GM18951 (cell line): ENCODE measurements at regions of chr3 and their contacts with region 1.

Region 1: GRCh38 chr3:45938864-45939263 is 4.4 kb upstream of the CXCR6 start:
- POLR2A ChIP-seq: no peak

Region 2: GRCh38 chr3:45507820-45508317 is 431.0 kb before region 1 on chr3:
- in situ Hi-C with region 1: loop called (anchors 25 kb)
- POLR2A ChIP-seq: no peak

Region 3: DNA sequence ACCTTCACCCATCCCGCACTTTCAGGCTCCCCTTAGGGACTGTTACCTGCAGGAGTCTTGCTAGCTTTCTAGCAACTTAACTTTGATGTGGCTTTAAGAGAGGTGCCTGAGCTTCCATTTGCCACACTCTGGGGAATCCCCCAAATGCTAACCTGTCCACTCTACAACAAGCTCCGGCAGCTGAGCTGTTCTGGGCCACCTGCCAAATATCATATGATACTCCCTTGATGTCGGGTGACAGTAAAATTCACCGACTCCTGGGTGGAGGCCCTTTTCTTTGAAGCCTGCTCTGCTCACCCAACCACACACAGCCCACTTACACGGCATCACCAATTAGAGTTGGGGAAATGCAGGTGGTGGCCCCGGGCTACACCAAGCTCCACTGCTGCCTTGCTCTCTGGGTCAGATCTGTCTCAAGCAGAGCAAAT is 126.4 kb after region 1 on chr3:
- in situ Hi-C with region 1: loop called (anchors 5 kb)
- POLR2A ChIP-seq: no peak

Region 4: DNA sequence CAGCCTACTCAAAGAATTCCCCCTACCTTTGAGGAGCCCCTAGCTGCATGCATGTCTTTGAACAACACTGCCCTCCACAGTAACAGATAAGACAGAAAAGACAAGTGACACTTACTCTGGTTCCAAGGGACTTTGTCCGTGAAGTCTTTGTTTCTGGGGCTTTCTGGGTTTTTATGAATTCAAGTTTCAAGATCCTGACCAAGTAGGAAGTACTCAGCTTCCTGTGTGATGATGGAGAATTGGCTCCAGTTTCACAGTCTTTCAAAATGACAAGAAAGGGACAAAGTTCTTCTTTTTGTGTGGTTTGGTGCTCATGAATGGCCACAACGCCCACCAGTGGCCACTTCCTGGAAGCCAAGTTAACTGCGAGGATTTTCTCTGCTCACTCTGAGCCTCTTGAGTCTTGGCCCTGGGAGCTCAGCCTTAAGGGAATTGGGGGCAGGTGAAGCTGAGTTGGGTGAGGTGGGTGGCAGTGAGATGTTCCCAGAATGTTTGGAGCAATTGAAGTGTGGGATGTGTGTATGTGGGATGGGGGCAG is 269.4 kb after region 1 on chr3 and contains the start of gene CCR1:
- in situ Hi-C with region 1: loop called (anchors 25 kb)
- POLR2A ChIP-seq: no peak

Region 5: DNA sequence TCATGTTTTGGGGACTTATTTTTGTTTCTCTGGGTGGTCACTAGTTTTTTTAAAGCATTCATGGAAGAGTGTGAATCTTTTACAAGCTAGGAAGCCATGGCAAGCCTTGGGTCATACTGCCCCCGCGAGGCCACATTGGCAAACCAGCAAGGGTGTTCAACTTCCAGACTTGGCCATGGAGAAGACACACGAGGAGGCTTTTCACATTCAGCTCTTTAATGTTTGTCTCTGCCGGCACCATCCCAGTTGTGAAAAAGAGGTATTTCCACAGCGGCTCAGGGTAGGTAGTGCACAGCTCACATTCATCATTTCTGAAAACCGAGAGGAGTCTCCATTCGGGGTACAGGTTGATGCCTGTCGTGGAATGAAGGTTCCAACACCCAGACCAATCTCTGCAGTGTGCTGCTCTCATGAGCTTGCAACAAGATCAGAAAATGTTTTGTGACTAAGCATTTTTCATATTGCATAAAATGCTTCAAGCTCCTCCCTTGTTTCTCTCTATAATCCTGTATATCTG is 439.6 kb after region 1 on chr3:
- in situ Hi-C with region 1: loop called (anchors 10 kb)
- POLR2A ChIP-seq: no peak